ENCODE measurements at regions of chr1 and their contacts with region 1.

Region 1: GRCh38 chr1:111448918-111449702 is at the starts of genes ATP5PB and WDR77:
- DNase-seq: peak; percentile 94
- ATAC-seq: peak; percentile 98
- H3K4me3 Mint-ChIP-seq: peak within 1 kb of the TSS; percentile 99
- H3K27ac Mint-ChIP-seq: peak within 1 kb of the TSS; percentile 98
- H3K4me1 Mint-ChIP-seq: peaks cover 79% of the 10 kb centered on the region
- H3K27me3 Mint-ChIP-seq: no peaks in the 10 kb centered on the region
- total RNA-seq, gene ATP5PB: 292 to 301 TPM
- total RNA-seq, gene WDR77: 42.5 to 53.6 TPM

Region 2: DNA sequence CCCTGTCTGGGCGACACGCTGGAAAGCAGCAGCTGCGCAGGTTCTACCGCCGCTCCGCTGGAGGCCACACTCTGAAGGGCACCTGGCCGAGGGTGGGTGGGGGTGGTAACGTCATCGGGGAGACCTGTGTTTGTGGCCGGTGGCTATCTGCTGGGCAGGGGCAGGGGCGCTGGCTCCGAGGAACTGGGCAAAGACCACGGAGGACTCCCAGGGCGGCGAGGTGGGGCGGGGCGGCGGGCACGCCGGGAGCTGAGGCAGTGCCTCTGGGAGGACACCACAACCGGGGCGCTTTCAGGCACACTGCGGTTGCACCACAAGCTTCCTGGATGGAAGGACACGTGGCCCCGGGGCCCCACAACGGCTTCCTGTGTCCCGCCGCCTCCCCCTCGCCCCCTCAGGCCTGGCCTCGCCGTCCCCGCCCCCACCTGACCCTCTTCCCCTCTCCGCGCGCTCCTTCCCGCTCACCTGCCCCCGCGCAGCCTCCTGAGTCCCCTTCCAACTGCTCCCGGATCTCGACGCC is 245.4 kb before region 1 on chr1:
- CTCF ChIA-PET with region 1: no interaction called
- POLR2A ChIA-PET with region 1: no interaction called
- intact Hi-C with region 1: loop called in 1 of 2 experiments (anchors 5 kb)
- DNase-seq: peak; percentile 92
- ATAC-seq: peak; percentile 27
- H3K4me3 Mint-ChIP-seq: peak overlapping the region; percentile 96
- H3K27ac Mint-ChIP-seq: peak overlapping the region; percentile 98
- H3K4me1 Mint-ChIP-seq: peaks cover 56% of the 10 kb centered on the region
- H3K27me3 Mint-ChIP-seq: no peaks in the 10 kb centered on the region

Region 3: GRCh38 chr1:111399792-111400610 is 49.1 kb before region 1 on chr1:
- CTCF ChIA-PET with region 1: interaction called, 4 read pairs
- POLR2A ChIA-PET with region 1: no interaction called
- intact Hi-C with region 1: loop called in 1 of 2 experiments (anchors 5 kb)
- DNase-seq: peak; percentile 65
- ATAC-seq: no peak
- H3K4me3 Mint-ChIP-seq: no peak overlapping the region
- H3K27ac Mint-ChIP-seq: no peak overlapping the region
- H3K4me1 Mint-ChIP-seq: peaks cover 34% of the 10 kb centered on the region
- H3K27me3 Mint-ChIP-seq: no peaks in the 10 kb centered on the region

Region 4: DNA sequence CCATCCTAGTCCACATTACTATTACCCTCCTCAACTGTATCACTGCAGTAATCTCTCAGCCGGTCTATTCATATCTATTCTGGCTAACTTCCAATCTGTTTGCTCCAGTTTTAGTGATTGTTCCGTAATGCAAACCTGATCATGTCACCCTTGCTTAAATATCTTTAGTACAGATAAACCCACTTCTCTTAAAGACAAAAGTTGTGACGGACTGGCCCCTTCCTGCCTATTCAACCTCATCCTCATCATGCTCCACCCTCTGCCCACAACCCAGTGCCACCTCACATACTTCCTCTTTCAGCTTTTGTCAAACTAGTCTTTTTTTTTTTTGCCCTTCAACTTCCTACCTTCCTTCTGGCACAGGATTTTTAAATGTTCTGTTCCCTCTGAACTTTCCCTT is 21.9 kb after region 1 on chr1:
- CTCF ChIA-PET with region 1: interaction called, 6 read pairs
- POLR2A ChIA-PET with region 1: interaction called, 3 read pairs
- intact Hi-C with region 1: loop called (anchors 1 to 2 kb)
- DNase-seq: peak; percentile 76
- ATAC-seq: peak; percentile 82
- H3K4me3 Mint-ChIP-seq: no peak overlapping the region
- H3K27ac Mint-ChIP-seq: no peak overlapping the region
- H3K4me1 Mint-ChIP-seq: peaks cover 35% of the 10 kb centered on the region
- H3K27me3 Mint-ChIP-seq: no peaks in the 10 kb centered on the region

Region 5: DNA sequence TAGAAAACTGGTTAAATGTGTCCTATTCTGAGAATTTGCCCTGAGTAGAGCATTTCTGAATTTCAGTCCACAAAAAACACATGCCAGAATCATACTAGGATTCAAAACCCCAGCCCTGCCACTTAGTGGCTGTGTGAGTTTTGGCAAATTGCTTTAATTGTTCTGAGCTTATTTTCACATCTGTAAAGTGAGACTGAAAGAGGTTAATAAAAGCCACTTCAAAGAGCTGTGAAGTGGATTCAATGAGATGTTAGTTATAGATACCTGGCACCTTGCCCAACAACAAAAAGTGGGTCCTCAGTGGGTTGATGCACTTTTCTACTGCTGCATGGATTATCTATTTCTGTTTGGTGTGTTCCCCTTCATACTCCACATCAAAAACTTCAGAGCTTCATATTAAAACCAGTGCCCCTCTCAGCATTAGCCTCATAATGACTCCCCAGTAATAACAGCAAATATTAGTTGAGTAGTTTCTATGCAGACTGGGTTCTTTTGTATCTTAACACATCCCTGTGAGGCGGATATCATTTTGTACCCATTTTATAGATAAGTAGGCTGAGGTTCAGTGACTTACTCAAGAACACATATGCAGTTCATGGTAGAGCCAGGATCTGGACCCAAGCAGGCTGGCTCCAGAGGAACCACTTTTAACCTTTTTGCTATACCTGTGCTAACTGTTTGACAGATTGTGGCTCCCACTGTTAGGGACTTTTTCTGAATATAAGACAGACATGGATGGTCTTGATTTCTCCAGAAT is 68.5 kb after region 1 on chr1:
- CTCF ChIA-PET with region 1: no interaction called
- POLR2A ChIA-PET with region 1: no interaction called
- intact Hi-C with region 1: no loop called
- DNase-seq: peak; percentile 57
- ATAC-seq: peak; percentile 54
- H3K4me3 Mint-ChIP-seq: no peak overlapping the region
- H3K27ac Mint-ChIP-seq: peak overlapping the region; percentile 44
- H3K4me1 Mint-ChIP-seq: peaks cover 45% of the 10 kb centered on the region
- H3K27me3 Mint-ChIP-seq: no peaks in the 10 kb centered on the region

Region 6: DNA sequence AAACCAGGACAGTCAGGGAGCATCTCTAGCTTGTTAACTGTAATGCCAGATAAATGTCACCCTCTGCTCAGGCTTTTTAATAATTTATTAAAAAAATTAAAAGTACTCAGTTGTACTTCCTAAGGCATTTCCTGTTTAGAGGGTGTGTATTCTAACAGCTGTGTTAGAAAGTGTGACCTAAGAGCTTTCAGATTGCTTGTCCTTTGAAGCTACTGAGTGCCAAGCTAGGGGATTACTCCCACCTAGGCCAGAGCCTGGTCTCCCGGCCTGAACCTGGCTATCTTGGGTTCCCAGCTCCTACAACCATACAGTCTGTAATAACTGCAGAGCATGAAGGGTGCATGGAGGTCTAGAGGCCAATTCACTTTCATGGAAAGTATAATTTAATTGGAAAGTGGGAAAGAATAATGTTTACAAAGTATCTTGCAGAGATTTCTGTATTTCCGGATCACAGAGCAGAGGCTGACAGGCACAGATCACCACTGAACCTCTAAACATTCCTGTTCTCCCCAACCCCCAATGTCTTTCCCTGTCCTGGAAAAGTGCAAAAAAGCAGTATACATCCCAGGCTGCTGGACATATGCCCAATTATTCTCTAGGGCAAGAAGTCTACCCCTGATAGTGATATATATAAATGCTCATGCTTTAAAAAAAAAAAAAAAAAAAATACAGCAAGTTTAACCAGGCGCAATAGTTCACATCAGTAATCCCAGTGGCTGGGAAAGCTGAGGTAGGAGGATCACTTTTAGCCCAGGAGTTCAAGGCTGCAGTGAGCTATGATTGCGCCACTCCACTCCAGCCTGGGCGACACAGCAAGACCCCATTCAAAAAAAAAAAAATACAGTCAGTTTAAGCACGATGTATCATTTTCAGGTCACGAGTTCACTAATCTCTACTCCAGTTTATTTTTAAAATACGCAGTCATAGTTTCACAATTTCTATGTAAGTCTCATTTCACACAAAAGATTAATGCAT is 133.8 kb after region 1 on chr1:
- CTCF ChIA-PET with region 1: no interaction called
- POLR2A ChIA-PET with region 1: no interaction called
- intact Hi-C with region 1: no loop called
- DNase-seq: no peak
- ATAC-seq: no peak
- H3K4me3 Mint-ChIP-seq: no peak overlapping the region
- H3K27ac Mint-ChIP-seq: no peak overlapping the region
- H3K4me1 Mint-ChIP-seq: no peaks in the 10 kb centered on the region
- H3K27me3 Mint-ChIP-seq: no peaks in the 10 kb centered on the region

Region 7: GRCh38 chr1:111619635-111620440 is 170.7 kb after region 1 on chr1 and contains the start of gene RAP1A:
- CTCF ChIA-PET with region 1: no interaction called
- POLR2A ChIA-PET with region 1: no interaction called
- intact Hi-C with region 1: loop called in 1 of 2 experiments (anchors 1 kb)
- DNase-seq: peak; percentile 98
- ATAC-seq: peak; percentile 71
- H3K4me3 Mint-ChIP-seq: peak within 1 kb of the TSS; percentile 96
- H3K27ac Mint-ChIP-seq: peak within 1 kb of the TSS; percentile 97
- H3K4me1 Mint-ChIP-seq: peaks cover 72% of the 10 kb centered on the region
- H3K27me3 Mint-ChIP-seq: no peaks in the 10 kb centered on the region
- total RNA-seq, gene RAP1A: 182 to 214 TPM

Region 8: GRCh38 chr1:111739194-111739924 is 290.2 kb after region 1 on chr1 and contains the start of gene INKA2:
- CTCF ChIA-PET with region 1: interaction called, 3 read pairs
- POLR2A ChIA-PET with region 1: no interaction called
- intact Hi-C with region 1: loop called in 1 of 2 experiments (anchors 1 kb)
- DNase-seq: peak; percentile 89
- ATAC-seq: peak; percentile 87
- H3K4me3 Mint-ChIP-seq: peak within 1 kb of the TSS; percentile 80
- H3K27ac Mint-ChIP-seq: peak within 1 kb of the TSS; percentile 11
- H3K4me1 Mint-ChIP-seq: peaks cover 15% of the 10 kb centered on the region
- H3K27me3 Mint-ChIP-seq: peaks cover 32% of the 10 kb centered on the region
- total RNA-seq, gene INKA2: 0.25 to 0.49 TPM